PC-3 (cell line): ENCODE measurements at regions of chr12 and their contacts with region 1.

Region 1: GRCh38 chr12:75289753-75290152 is 40.4 kb downstream of the CAPS2 start:
- DNase-seq: peak; percentile 59
- ATAC-seq: no peak
- H3K4me3 ChIP-seq: no peak overlapping the region
- H3K27ac ChIP-seq: no peak overlapping the region
- H3K4me1 ChIP-seq: no peaks in the 10 kb centered on the region
- H3K27me3 ChIP-seq: no peaks in the 10 kb centered on the region
- CTCF ChIP-seq: peak; percentile 78

Region 2: GRCh38 chr12:74689071-74689655 is 600.6 kb before region 1 on chr12:
- CTCF ChIA-PET with region 1: no interaction called
- POLR2A ChIA-PET with region 1: no interaction called
- intact Hi-C with region 1: loop called (anchors 1 kb)
- DNase-seq: peak; percentile 65
- ATAC-seq: 0 out of 2 replicates have a peak, but pooled peaks have one; percentile 31
- H3K4me3 ChIP-seq: no peak overlapping the region
- H3K27ac ChIP-seq: no peak overlapping the region
- H3K4me1 ChIP-seq: no peaks in the 10 kb centered on the region
- H3K27me3 ChIP-seq: no peaks in the 10 kb centered on the region
- CTCF ChIP-seq: peak; percentile 80

Region 3: GRCh38 chr12:74747305-74747704 is 542.4 kb before region 1 on chr12:
- CTCF ChIA-PET with region 1: no interaction called
- POLR2A ChIA-PET with region 1: no interaction called
- intact Hi-C with region 1: loop called (anchors 1 kb)
- DNase-seq: peak; percentile 44
- ATAC-seq: peak; percentile 33; the same call in 1 of the 2 replicates
- H3K4me3 ChIP-seq: no peak overlapping the region
- H3K27ac ChIP-seq: no peak overlapping the region
- H3K4me1 ChIP-seq: no peaks in the 10 kb centered on the region
- H3K27me3 ChIP-seq: no peaks in the 10 kb centered on the region
- CTCF ChIP-seq: peak; percentile 57

Region 4: DNA sequence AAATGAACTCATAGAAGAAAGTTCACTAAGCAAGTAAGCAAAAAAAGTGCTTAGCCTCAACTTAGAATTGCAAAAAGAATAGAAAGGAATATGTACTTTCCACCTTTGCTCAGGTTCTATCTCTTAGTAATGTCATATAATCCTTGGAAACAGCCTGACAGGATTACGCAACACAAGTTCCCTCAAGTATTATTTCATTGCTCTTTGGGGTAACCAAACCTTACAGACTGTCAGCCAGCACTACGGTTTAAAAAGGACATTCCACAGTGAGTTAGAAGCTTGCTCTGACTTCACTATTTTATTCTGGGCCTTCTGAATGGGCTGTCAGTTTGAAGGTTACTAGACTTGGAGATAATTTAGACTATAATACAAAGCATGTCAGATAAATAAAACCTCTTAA is 488.1 kb before region 1 on chr12:
- CTCF ChIA-PET with region 1: interaction called, 3 read pairs
- POLR2A ChIA-PET with region 1: no interaction called
- intact Hi-C with region 1: loop called (anchors 5 kb)
- DNase-seq: no peak
- ATAC-seq: no peak
- H3K4me3 ChIP-seq: no peak overlapping the region
- H3K27ac ChIP-seq: no peak overlapping the region
- H3K4me1 ChIP-seq: no peaks in the 10 kb centered on the region
- H3K27me3 ChIP-seq: no peaks in the 10 kb centered on the region
- CTCF ChIP-seq: no peak

Region 5: DNA sequence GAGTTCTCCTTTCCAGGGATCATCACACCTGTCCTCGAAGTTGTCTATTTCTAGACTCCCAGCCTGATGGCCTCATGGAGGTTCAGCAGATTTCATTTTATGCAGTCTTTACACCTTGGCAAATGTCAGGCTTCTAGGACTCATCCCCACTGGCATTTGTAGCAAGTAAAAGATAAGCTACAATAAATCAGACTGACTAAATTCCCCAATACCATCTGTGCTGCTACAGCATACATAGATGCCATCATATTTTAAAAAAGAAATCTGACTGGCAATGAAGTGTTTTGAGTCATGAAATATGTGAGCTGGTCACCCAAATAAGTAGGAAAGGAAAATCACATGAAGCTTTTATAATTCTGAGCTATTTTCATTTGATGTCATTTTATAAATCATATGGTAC is 135.4 kb before region 1 on chr12:
- CTCF ChIA-PET with region 1: interaction called, 3 read pairs
- POLR2A ChIA-PET with region 1: no interaction called
- intact Hi-C with region 1: loop called (anchors 2 kb)
- DNase-seq: no peak
- ATAC-seq: no peak
- H3K4me3 ChIP-seq: no peak overlapping the region
- H3K27ac ChIP-seq: no peak overlapping the region
- H3K4me1 ChIP-seq: no peaks in the 10 kb centered on the region
- H3K27me3 ChIP-seq: no peaks in the 10 kb centered on the region
- CTCF ChIP-seq: no peak

Region 6: DNA sequence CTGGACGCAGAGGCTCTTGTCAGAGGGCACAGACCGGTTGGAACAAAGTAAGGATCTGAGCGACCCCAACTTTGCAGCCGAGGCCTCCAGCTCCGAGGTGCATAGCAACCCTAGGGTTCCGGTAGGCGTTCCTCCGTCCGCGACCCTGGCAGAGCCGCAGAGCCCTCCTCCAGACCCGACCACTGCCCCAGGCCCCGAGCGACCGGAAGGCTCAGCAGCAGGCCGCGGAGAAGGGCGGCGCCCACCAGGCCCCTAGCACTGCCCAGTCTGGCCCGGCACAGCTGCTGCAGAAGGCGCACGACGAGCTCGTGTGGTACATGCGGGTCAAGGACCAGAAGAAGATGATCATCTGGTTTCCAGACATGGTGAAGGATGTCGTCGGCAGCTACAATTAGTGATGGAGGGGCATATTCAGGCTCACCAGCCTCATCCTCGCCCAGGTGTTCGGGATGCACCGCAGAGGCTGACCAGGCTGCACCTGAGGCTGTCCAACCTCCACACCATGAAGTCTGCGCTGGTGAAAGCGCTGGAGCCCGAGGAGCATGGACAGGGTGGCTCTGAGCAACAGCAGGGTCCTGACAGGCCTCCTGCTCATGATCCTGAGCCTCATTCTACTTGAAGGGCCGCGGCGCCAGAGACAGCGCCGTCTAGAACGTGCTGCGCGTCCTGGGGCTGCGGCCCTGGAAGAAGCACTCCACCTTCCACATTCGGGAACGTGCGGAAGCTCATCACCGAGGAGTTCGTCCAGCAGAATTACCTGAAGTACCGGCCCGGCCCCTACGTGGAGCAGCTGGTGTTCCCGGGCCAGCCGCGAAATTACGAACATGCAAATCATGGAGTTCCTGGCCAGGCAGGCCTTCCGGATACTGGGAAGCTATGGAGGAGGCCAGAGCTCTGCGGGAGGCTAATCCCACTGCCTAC is 15.9 kb after region 1 on chr12:
- CTCF ChIA-PET with region 1: no interaction called
- POLR2A ChIA-PET with region 1: no interaction called
- intact Hi-C with region 1: no loop called
- DNase-seq: no peak
- ATAC-seq: no peak
- H3K4me3 ChIP-seq: no peak overlapping the region
- H3K27ac ChIP-seq: no peak overlapping the region
- H3K4me1 ChIP-seq: no peaks in the 10 kb centered on the region; the same call in 1 of the 2 replicates
- H3K27me3 ChIP-seq: no peaks in the 10 kb centered on the region
- CTCF ChIP-seq: no peak